CD4-positive, alpha-beta T cell (primary cell): ENCODE measurements at regions of chr16 and their contacts with region 1.

Region 1: DNA sequence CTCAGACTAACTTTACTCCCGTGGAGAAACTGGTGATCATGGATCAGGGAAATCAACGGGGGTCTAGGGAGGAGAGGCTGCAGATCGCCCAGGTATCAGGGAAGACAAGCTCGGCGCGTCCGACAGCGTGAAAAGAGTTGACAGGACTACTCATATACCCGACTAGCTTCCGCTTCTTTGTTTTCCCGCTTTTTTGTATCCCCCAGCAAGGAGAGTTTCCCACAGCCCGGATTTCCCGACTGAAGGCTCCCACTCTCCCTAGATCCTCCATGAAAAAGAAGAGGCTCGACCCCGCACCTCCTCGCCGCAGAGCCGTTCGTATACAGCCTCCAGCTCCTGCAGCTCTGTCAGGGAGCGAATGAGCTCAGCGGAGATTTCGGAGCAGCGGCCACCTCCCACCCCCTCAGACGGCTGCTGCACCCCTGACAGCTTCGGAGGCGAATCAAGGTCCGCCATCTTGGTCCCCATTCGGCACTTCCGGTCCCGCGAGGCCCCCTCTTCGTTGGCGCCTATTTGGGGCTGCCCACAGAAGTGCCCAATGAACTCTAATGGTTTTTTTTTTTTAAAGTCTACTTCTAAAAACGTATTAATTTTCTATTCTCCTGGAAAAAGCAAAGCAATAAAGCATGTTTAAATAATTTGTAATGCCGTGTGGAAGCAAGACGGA is at the start of gene COG4:
- DNase-seq: peak; percentile 83 to 96 (median 89)
- ATAC-seq: peak; percentile 76
- H3K4me3 ChIP-seq: peak within 1 kb of the TSS; percentile 96
- H3K4me3 Mint-ChIP-seq: peak within 1 kb of the TSS; percentile 95
- H3K27ac ChIP-seq: peak within 1 kb of the TSS; percentile 94 to 96
- H3K27ac Mint-ChIP-seq: peak within 1 kb of the TSS; percentile 97
- H3K4me1 ChIP-seq: peaks cover 56% of the 10 kb centered on the region
- H3K4me1 Mint-ChIP-seq: peaks cover 59% of the 10 kb centered on the region
- H3K27me3 ChIP-seq: no peaks in the 10 kb centered on the region
- H3K27me3 Mint-ChIP-seq: no peaks in the 10 kb centered on the region
- CTCF ChIP-seq: no peak
- total RNA-seq, gene COG4: 15.9 to 19.3 TPM

Region 2: DNA sequence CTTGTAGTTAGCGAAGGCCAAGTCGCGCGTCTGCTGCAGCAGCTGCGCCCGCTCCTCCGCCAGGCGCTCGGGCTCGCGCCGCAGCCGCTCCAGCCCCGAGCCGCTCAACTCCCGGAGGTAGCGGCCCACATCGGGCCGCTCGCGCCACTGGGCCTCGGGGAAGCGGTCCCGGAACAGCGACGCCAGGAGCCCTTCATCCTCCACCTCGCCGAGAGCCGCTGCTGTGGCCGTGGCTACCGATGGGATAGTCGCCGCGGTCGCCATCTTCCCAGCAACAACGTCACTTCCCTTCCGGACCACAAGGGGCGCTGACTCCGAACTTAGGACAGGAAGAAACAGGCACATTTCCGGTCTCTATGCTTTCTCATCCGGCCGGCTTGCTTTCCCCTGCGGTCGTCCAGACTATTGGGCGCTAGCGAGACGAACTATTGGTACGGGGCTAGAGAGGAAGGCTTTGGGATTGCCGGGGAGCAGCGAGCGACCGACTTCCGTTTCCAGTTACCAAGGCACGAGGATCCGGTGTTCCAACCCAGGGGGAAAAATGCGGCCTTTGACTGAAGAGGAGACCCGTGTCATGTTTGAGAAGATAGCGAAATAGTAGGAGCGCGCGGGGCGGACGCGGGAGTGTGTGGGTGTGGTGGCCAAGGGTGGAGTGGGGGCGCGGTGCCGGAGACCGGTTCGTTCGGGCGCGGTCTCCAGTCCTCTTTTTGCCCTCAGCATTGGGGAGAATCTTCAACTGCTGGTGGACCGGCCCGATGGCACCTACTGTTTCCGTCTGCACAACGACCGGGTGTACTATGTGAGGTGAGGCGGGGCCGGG is 1183.7 kb before region 1 on chr16 and contains the starts of genes COG8 and NIP7:
- CTCF ChIA-PET with region 1: no interaction called
- POLR2A ChIA-PET with region 1: no interaction called
- intact Hi-C with region 1: loop called in 1 of 2 experiments (anchors 10 kb)
- DNase-seq: peak; percentile 84 to 96 (median 89)
- ATAC-seq: peak; percentile 89
- H3K4me3 ChIP-seq: peak within 1 kb of the TSS; percentile 63
- H3K4me3 Mint-ChIP-seq: peak within 1 kb of the TSS; percentile 96
- H3K27ac ChIP-seq: peak within 1 kb of the TSS; percentile 79 to 80
- H3K27ac Mint-ChIP-seq: peak within 1 kb of the TSS; percentile 90
- H3K4me1 ChIP-seq: peaks cover 31% of the 10 kb centered on the region
- H3K4me1 Mint-ChIP-seq: peaks cover 61% of the 10 kb centered on the region
- H3K27me3 ChIP-seq: no peaks in the 10 kb centered on the region
- H3K27me3 Mint-ChIP-seq: no peaks in the 10 kb centered on the region
- CTCF ChIP-seq: peak; percentile 82
- total RNA-seq, gene COG8: 18.4 to 19.3 TPM
- total RNA-seq, gene NIP7: 36.7 to 38.2 TPM

Region 3: GRCh38 chr16:70289229-70290098 is 233.7 kb before region 1 on chr16 and contains the start of gene AARS1:
- CTCF ChIA-PET with region 1: no interaction called
- POLR2A ChIA-PET with region 1: interaction called, 13 read pairs
- intact Hi-C with region 1: no loop called
- DNase-seq: peak; percentile 86 to 99 (median 90)
- ATAC-seq: peak; percentile 94
- H3K4me3 ChIP-seq: peak within 1 kb of the TSS; percentile 95
- H3K4me3 Mint-ChIP-seq: peak within 1 kb of the TSS; percentile 96
- H3K27ac ChIP-seq: peak within 1 kb of the TSS; percentile 74 to 86
- H3K27ac Mint-ChIP-seq: peak within 1 kb of the TSS; percentile 91
- H3K4me1 ChIP-seq: peaks cover 22% of the 10 kb centered on the region
- H3K4me1 Mint-ChIP-seq: peaks cover 21% of the 10 kb centered on the region
- H3K27me3 ChIP-seq: no peaks in the 10 kb centered on the region
- H3K27me3 Mint-ChIP-seq: no peaks in the 10 kb centered on the region
- CTCF ChIP-seq: no peak
- total RNA-seq, gene AARS1: 10.3 to 11.1 TPM

Region 4: DNA sequence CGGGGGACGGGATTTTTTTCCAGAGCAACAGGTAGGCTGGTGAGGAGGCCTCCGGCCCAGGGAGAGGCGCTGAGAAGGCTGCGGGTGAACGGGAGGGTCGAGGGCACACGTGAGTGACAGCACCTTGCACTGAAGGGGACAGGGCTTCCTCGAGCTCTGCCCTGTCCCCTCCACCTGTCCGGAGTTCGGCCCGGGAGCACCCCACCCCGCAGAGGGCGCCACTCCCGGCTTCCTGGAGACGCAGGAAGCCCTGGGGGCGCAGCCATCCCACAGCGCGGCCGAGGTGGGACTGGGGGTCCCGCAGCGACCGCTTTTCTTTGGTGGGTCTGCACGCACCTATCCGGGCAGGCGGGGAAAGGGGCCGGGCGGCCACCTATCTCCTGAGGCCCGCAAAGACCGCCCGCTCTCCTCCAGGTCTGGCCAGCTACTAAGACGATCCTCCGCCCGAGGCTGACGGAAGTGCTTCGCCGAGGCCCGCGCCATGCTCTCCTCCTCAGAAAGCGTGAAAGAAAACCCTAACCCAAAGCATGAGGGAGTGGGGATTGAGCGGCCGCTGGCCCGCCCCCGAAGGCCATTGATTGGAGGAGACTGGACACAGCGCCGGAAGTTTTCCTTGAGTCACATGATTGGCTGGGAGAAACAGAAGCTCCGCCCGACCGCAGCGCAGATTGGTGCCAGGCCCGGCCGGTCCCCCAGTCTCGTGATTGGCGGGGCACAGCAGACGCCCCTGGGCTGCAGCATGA is 142.2 kb before region 1 on chr16:
- CTCF ChIA-PET with region 1: no interaction called
- POLR2A ChIA-PET with region 1: interaction called, 30 read pairs
- intact Hi-C with region 1: loop called (anchors 1 to 2 kb)
- DNase-seq: peak; percentile 91 to 98 (median 94)
- ATAC-seq: peak; percentile 90
- H3K4me3 ChIP-seq: peak overlapping the region; percentile 68
- H3K4me3 Mint-ChIP-seq: peak overlapping the region; percentile 98
- H3K27ac ChIP-seq: peak overlapping the region; percentile 64 to 79
- H3K27ac Mint-ChIP-seq: peak overlapping the region; percentile 92
- H3K4me1 ChIP-seq: peaks cover 32% of the 10 kb centered on the region
- H3K4me1 Mint-ChIP-seq: peaks cover 25% of the 10 kb centered on the region
- H3K27me3 ChIP-seq: no peaks in the 10 kb centered on the region
- H3K27me3 Mint-ChIP-seq: no peaks in the 10 kb centered on the region
- CTCF ChIP-seq: peak; percentile 38

Region 5: GRCh38 chr16:70454222-70455034 is 68.8 kb before region 1 on chr16 and contains the start of gene FCSK:
- CTCF ChIA-PET with region 1: no interaction called
- POLR2A ChIA-PET with region 1: interaction called, 8 read pairs
- intact Hi-C with region 1: loop called in 1 of 2 experiments (anchors 5 kb)
- DNase-seq: peak; percentile 50 to 85 (median 59)
- ATAC-seq: peak; percentile 91
- H3K4me3 ChIP-seq: peak within 1 kb of the TSS; percentile 93
- H3K4me3 Mint-ChIP-seq: peak within 1 kb of the TSS; percentile 90
- H3K27ac ChIP-seq: peak within 1 kb of the TSS; percentile 89 to 95
- H3K27ac Mint-ChIP-seq: peak within 1 kb of the TSS; percentile 61
- H3K4me1 ChIP-seq: peaks cover 21% of the 10 kb centered on the region
- H3K4me1 Mint-ChIP-seq: peaks cover 23% of the 10 kb centered on the region
- H3K27me3 ChIP-seq: no peaks in the 10 kb centered on the region
- H3K27me3 Mint-ChIP-seq: no peaks in the 10 kb centered on the region
- CTCF ChIP-seq: no peak
- total RNA-seq, gene FCSK: 21.8 to 25.4 TPM

Region 6: GRCh38 chr16:70770626-70771552 is 247.7 kb after region 1 on chr16:
- CTCF ChIA-PET with region 1: no interaction called
- POLR2A ChIA-PET with region 1: no interaction called
- intact Hi-C with region 1: no loop called
- DNase-seq: peak; percentile 17 to 66 (median 45)
- ATAC-seq: peak; percentile 84
- H3K4me3 ChIP-seq: no peak overlapping the region
- H3K4me3 Mint-ChIP-seq: no peak overlapping the region
- H3K27ac ChIP-seq: no peak overlapping the region
- H3K27ac Mint-ChIP-seq: no peak overlapping the region
- H3K4me1 ChIP-seq: no peaks in the 10 kb centered on the region
- H3K4me1 Mint-ChIP-seq: no peaks in the 10 kb centered on the region
- H3K27me3 ChIP-seq: no peaks in the 10 kb centered on the region
- H3K27me3 Mint-ChIP-seq: no peaks in the 10 kb centered on the region
- CTCF ChIP-seq: peak; percentile 86

Region 7: GRCh38 chr16:72008424-72009216 is 1485.4 kb after region 1 on chr16 and contains the start of gene DHODH:
- CTCF ChIA-PET with region 1: no interaction called
- POLR2A ChIA-PET with region 1: no interaction called
- intact Hi-C with region 1: loop called in 1 of 2 experiments (anchors 5 kb)
- DNase-seq: peak; percentile 94 to 99 (median 97)
- ATAC-seq: peak; percentile 99
- H3K4me3 ChIP-seq: peak within 1 kb of the TSS; percentile 99
- H3K4me3 Mint-ChIP-seq: peak within 1 kb of the TSS; percentile 96
- H3K27ac ChIP-seq: peak within 1 kb of the TSS; percentile 29 to 58
- H3K27ac Mint-ChIP-seq: peak within 1 kb of the TSS; percentile 73
- H3K4me1 ChIP-seq: peaks cover 19% of the 10 kb centered on the region
- H3K4me1 Mint-ChIP-seq: peaks cover 12% of the 10 kb centered on the region
- H3K27me3 ChIP-seq: no peaks in the 10 kb centered on the region
- H3K27me3 Mint-ChIP-seq: no peaks in the 10 kb centered on the region
- CTCF ChIP-seq: no peak
- total RNA-seq, gene DHODH: 2.5 to 2.7 TPM